Activated naive CD4-positive, alpha-beta T cell treated with anti-CD3 and anti-CD28 coated beads, Interleukin-2, amount 10 ng/mL, durations not matched to agents 7 days and 5 days (primary cell): ENCODE measurements at regions of chr10 and their contacts with region 1.

Region 1: DNA sequence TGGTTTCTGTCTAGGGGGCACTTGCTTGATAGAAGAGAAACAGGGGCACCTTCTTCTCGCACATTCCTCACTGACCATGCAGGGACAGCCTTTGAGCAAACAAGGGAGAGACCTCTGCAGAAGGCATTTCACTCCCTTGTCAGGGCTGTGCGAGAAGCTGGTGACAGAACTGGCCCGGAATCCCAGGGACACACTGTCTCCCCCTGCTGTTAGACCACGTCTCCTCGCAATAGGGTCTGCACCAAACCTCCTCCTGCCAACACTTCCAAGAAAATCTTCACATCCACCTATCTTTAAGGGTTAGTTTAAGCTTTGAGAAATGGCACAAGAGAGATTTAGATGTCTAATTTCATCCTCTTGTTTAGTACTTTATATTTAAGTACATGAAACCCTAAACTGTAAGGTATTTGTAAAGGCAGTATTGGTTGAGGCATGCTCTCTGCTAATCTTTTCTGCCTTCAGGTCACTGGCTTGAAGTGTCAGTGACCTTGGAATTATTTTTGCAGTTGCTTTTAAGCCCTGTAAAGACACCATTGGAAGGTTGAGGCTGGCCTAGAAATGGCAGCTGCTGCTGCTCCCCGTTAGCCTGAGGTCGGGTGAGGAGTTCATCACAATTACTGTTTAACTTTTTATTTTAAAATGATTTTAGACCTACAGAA is 37.0 kb downstream of the RBM20 start:
- DNase-seq: peak; percentile 56
- H3K4me3 Mint-ChIP-seq: no peak overlapping the region
- H3K27ac Mint-ChIP-seq: no peak overlapping the region
- H3K4me1 Mint-ChIP-seq: no peaks in the 10 kb centered on the region
- H3K27me3 Mint-ChIP-seq: peaks cover 12% of the 10 kb centered on the region

Region 2: GRCh38 chr10:110610308-110610774 is 70.8 kb before region 1 on chr10:
- CTCF ChIA-PET with region 1: interaction called, 13 read pairs
- DNase-seq: peak; percentile 68
- H3K4me3 Mint-ChIP-seq: no peak overlapping the region
- H3K27ac Mint-ChIP-seq: no peak overlapping the region
- H3K4me1 Mint-ChIP-seq: peaks cover 18% of the 10 kb centered on the region
- H3K27me3 Mint-ChIP-seq: peaks cover 1% of the 10 kb centered on the region